Right cardiac atrium (tissue), 5 donors: ENCODE measurements at regions of chr1 and their contacts with region 1.

Region 1: GRCh38 chr1:228748431-228748830 is 13.2 kb downstream of the RHOU start:
- DNase-seq: no peak
- ATAC-seq: no peak
- H3K4me3 ChIP-seq: no peak overlapping the region
- H3K27ac ChIP-seq: no peak overlapping the region
- H3K4me1 ChIP-seq: no peaks in the 10 kb centered on the region
- H3K27me3 ChIP-seq: no peaks in the 10 kb centered on the region

Region 2: GRCh38 chr1:228804671-228805413 is 56.4 kb after region 1 on chr1:
- intact Hi-C with region 1: loop called in 1 of 4 experiments (anchors 10 kb)
- DNase-seq: no peak
- ATAC-seq: peak; percentile 25 to 51
- H3K4me3 ChIP-seq: no peak overlapping the region
- H3K27ac ChIP-seq: no peak overlapping the region
- H3K4me1 ChIP-seq: no peaks in the 10 kb centered on the region
- H3K27me3 ChIP-seq: no peaks in the 10 kb centered on the region

Region 3: GRCh38 chr1:228902781-228903433 is 154.5 kb after region 1 on chr1:
- intact Hi-C with region 1: loop called in 1 of 4 experiments (anchors 10 kb)
- DNase-seq: peak; percentile 86 to 92 (median 88)
- ATAC-seq: peak; percentile 86 to 92
- H3K4me3 ChIP-seq: no peak overlapping the region
- H3K27ac ChIP-seq: no peak overlapping the region
- H3K4me1 ChIP-seq: peaks cover 4% of the 10 kb centered on the region
- H3K27me3 ChIP-seq: no peaks in the 10 kb centered on the region